ENCODE measurements at regions of chr19 and their contacts with region 1.

Region 1: DNA sequence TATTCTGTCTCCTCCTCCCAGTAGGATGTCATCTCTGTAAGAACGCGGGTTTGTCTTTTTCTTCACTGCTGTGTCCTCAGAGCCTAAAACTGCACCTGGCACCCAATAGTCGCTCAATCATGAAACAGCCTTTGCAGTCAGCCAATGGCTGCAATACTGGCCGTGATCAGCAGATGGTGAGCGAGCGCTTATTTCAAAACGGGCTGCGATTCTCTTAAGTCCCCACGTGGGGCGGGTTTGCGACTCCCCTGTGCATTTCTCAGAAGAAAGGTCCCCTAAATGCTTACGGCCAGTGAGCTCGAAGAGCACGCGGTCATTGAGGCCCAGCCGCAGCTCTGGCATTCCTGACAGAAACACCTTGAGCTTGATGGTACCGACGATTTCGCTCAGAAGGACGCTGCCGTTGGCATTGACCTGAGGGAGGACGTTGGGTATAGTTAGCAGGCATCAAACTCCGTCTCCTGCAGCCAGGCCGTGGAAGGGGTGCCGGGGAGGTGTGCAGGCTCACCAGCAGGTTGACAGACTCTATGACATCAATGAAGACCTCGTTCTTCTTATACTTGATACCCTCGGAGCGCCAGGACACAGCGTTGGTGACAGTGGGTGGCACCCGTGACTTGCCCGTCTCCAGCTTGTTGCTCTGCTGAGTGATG is 6.0 kb downstream of the AP1M2 start:
- DNase-seq: peak; percentile 98
- ATAC-seq: peak; percentile 100
- H3K4me3 Mint-ChIP-seq: no peak overlapping the region
- H3K27ac Mint-ChIP-seq: no peak overlapping the region
- H3K4me1 Mint-ChIP-seq: peaks cover 7% of the 10 kb centered on the region
- H3K27me3 Mint-ChIP-seq: no peaks in the 10 kb centered on the region
- CTCF ChIP-seq: peak; percentile 100

Region 2: DNA sequence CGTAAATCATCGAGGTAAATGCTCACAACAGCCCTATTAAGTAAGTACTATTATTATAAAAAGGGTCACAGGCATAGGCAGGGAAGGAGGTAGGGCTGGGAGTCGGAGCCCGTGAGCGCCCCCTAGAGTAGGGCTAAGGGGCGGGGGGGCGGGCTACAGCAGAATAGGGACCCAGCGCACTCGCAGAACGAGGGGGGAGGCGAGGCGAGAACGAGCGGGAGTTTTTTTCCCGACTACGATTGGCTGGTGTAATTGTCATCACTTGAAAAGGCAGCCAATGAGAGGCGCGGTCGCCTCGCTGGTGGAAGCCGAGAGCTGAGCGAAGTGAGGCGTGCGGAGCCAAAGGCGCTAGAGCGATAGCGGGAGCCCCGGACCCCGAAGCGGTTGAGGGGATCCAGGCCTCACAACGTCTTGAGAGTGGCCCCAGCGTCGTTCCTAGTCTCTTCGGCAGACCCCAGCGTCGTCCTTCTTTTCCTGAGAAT is 102.2 kb before region 1 on chr19:
- CTCF ChIA-PET with region 1: interaction called, 10 read pairs
- POLR2A ChIA-PET with region 1: no interaction called
- intact Hi-C with region 1: no loop called
- DNase-seq: peak; percentile 95
- ATAC-seq: peak; percentile 97
- H3K4me3 Mint-ChIP-seq: peak overlapping the region; percentile 44
- H3K27ac Mint-ChIP-seq: no peak overlapping the region
- H3K4me1 Mint-ChIP-seq: peaks cover 9% of the 10 kb centered on the region
- H3K27me3 Mint-ChIP-seq: no peaks in the 10 kb centered on the region
- CTCF ChIP-seq: peak; percentile 92

Region 3: GRCh38 chr19:10593820-10594637 is 12.9 kb after region 1 on chr19:
- CTCF ChIA-PET with region 1: interaction called, 50 read pairs
- POLR2A ChIA-PET with region 1: interaction called, 5 read pairs
- intact Hi-C with region 1: no loop called
- DNase-seq: no peak
- ATAC-seq: no peak
- H3K4me3 Mint-ChIP-seq: no peak overlapping the region
- H3K27ac Mint-ChIP-seq: peak overlapping the region; percentile 73
- H3K4me1 Mint-ChIP-seq: peaks cover 22% of the 10 kb centered on the region
- H3K27me3 Mint-ChIP-seq: no peaks in the 10 kb centered on the region
- CTCF ChIP-seq: no peak

Region 4: GRCh38 chr19:10624585-10624984 is 43.5 kb after region 1 on chr19:
- CTCF ChIA-PET with region 1: interaction called, 31 read pairs
- POLR2A ChIA-PET with region 1: no interaction called
- intact Hi-C with region 1: no loop called
- DNase-seq: no peak
- ATAC-seq: peak; percentile 37
- H3K4me3 Mint-ChIP-seq: no peak overlapping the region
- H3K27ac Mint-ChIP-seq: peak overlapping the region; percentile 46
- H3K4me1 Mint-ChIP-seq: peaks cover 38% of the 10 kb centered on the region
- H3K27me3 Mint-ChIP-seq: no peaks in the 10 kb centered on the region
- CTCF ChIP-seq: no peak

Region 5: DNA sequence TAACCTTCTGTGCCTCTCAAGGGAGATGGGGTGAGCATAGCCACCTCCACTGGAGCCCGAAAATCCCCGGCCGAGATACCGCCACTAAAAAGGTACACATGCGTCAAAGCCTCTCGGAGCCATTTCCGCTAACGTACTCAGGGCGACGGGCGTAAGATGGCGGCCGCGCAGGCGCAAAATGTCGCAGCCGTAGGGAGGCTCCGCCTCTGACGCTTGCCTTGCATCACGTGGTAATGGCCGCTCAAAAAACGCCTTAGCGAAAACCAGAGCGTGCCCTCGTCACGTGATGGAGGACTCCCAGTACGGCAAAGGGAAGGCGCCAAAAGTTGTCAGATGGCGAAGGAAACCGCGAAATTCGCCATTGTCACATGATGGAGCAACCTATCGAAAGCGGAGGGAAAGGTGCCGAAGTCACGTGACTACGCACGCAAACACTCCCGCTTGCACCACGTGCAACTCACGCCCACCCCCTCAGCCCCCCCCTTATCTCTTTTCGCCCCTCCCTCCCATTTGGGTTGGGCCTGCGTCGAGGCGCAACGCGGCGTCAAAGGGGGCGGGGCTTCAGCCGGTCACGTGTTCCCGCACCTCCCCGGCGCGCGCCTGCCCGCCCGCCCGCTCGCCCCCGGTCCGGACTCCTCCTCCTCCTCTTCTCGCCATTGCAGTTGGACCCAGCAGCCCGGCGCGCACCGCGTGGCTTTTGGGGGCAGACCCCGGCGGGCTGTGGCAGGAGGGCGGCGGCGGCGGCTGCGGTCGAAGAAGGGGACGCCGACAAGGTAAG is 72.8 kb after region 1 on chr19 and contains the start of gene ILF3:
- CTCF ChIA-PET with region 1: interaction called, 409 read pairs
- POLR2A ChIA-PET with region 1: interaction called, 7 read pairs
- intact Hi-C with region 1: no loop called
- DNase-seq: peak; percentile 100
- ATAC-seq: peak; percentile 84
- H3K4me3 Mint-ChIP-seq: peak within 1 kb of the TSS; percentile 87
- H3K27ac Mint-ChIP-seq: peak within 1 kb of the TSS; percentile 98
- H3K4me1 Mint-ChIP-seq: peaks cover 28% of the 10 kb centered on the region
- H3K27me3 Mint-ChIP-seq: peaks cover 1% of the 10 kb centered on the region
- CTCF ChIP-seq: no peak
- total RNA-seq, gene ILF3: 435 to 450 TPM

Region 6: DNA sequence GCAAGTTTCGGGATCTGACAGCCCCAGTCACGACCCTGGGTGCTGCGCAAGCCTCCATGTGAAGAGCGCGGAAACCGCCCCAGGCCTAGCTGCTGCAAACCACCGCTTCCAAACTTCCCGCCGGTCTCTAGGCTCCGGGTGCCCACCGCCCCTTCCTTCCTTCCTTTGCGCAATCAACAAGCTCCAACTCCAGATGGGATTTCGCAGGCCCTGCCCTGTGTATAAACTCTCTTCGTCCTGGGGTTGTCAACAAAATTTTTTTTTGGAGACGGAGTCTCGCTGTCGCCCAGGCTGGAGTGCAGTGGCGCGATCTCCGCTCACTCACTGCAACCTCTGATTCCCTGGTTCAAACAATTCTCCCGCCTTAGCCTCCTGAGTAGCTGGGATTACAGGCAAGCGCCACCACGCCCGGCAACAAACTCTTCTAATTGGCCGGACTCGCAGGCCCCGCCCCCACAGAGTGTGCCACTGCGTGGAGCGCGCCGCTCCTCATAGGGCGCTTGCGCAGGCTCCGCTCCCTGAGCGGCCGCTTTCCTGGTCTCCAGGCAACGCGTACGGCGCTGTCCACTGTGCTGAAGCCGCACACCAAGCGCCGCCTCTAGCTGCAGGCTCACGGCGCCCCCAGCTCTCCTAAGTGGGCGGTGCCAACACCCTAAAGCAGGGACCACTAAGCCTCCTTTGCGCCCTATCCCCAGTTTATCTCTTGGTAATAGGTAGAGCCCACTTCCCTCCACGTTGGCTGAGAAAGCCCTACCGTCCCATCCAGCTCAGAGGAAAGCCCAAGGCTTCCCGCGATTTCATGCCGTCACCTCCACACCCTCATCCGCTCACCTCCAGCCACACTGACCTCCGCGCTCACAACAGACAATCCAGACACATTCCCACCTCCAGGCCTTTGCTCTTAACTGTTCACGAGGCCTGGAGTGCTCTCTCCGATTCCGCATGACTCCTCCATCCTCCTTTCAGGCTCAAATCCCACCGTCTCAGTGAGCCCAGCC is 114.6 kb after region 1 on chr19:
- CTCF ChIA-PET with region 1: interaction called, 175 read pairs
- POLR2A ChIA-PET with region 1: interaction called, 7 read pairs
- intact Hi-C with region 1: loop called (anchors 2 kb)
- DNase-seq: peak; percentile 93
- ATAC-seq: peak; percentile 99
- H3K4me3 Mint-ChIP-seq: peak overlapping the region; percentile 62
- H3K27ac Mint-ChIP-seq: no peak overlapping the region
- H3K4me1 Mint-ChIP-seq: peaks cover 17% of the 10 kb centered on the region
- H3K27me3 Mint-ChIP-seq: peaks cover 4% of the 10 kb centered on the region
- CTCF ChIP-seq: no peak

Measured in activated CD8-positive, alpha-beta T cell treated with anti-CD3 and anti-CD28 coated beads for 36 hours (primary cell).